ENCODE measurements at regions of chr6 and their contacts with region 1.

Region 1: DNA sequence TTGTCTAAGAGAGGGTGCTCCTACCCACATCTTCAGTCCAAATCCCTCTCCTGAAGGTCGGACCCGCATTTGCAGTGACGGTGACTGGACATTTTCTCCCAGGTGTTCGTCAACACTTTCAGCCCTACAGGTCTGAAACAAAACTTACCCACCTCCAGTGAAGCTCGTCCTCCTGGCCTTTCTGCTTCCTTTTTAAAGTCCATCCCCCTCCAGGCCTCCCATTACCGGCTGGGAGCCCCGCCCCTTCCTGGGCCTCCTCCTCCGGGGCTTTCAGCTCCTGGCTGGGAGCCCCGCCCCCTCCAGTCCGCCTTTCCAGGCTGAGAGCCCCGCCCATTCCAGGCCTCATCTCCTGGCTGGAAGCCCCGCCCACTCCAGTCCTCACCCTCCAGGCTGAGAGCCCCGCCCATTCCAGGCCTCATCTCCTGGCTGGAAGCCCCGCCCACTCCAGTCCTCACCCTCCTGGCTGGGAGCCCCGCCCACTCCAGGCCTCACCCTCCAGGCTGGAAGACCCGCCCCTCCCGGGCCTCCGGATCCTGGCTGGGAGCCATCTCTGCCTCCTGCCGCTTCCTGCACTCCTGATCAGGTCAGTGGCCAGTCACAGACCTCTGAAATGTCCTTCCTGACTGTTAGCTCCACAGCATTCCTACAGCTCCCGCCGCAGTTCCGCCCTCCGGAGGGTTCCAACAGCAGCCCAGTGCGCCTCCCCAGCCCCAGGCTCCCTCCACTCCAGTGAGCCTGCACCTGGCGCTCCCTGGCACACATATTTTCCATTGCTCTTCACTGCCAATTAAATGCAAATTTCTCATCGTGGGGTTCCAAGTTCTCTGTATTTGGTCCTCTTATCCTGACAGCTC is 98.5 kb downstream of the LY86 start:
- DNase-seq: peak; percentile 92 to 100
- H3K4me3 ChIP-seq: peak overlapping the region; percentile 73
- H3K27ac ChIP-seq: peak overlapping the region; percentile 91
- H3K4me1 ChIP-seq: peaks cover 67% of the 10 kb centered on the region
- H3K27me3 ChIP-seq: no peaks in the 10 kb centered on the region
- CTCF ChIP-seq: no peak

Region 2: GRCh38 chr6:6696867-6697531 is 10.0 kb after region 1 on chr6:
- CTCF ChIA-PET with region 1: interaction called, 34 read pairs
- POLR2A ChIA-PET with region 1: interaction called, 18 read pairs
- intact Hi-C with region 1: no loop called
- DNase-seq: peak; percentile 49 to 57
- H3K4me3 ChIP-seq: no peak overlapping the region
- H3K27ac ChIP-seq: no peak overlapping the region
- H3K4me1 ChIP-seq: peaks cover 29% of the 10 kb centered on the region
- H3K27me3 ChIP-seq: no peaks in the 10 kb centered on the region
- CTCF ChIP-seq: peak; percentile 71

Region 3: DNA sequence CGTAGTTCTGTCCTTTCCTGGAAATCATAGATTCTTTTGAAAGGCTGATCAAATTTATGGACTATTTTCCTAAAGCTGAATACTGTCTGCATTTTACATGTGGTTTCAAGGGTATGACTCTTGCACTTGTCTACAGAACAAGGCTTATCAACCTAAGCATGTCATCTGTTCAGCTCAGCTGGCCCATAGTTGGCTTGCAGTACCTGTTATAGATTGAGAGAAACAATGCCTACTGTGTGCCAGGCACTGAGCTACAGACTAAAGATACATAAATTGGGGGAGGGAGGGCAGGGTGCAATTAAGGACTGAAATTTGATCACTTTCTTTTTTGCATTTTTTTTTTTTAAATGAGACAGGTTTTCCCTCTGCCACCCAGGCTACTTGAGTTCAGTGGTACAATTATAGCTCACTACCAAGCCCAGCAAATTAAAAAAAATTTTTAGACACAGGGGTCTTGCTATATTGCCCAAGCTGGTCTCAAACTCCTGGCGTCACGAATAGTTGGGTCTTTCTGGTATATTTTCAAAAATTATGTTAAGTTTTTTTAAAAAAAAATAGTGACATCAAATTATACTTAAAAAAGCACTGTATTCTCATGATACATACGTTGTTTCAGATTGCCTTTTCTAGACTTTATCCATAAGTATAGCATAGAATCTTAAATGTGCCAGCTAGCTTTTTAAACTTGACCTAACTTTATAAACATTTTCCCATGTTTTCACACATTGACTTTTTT is 473.0 kb after region 1 on chr6:
- CTCF ChIA-PET with region 1: no interaction called
- POLR2A ChIA-PET with region 1: interaction called, 10 read pairs
- intact Hi-C with region 1: no loop called
- DNase-seq: no peak
- H3K4me3 ChIP-seq: no peak overlapping the region
- H3K27ac ChIP-seq: peak overlapping the region; percentile 85; the same call in 1 of the 2 replicates
- H3K4me1 ChIP-seq: peaks cover 50% of the 10 kb centered on the region
- H3K27me3 ChIP-seq: no peaks in the 10 kb centered on the region
- CTCF ChIP-seq: no peak

Region 4: GRCh38 chr6:7312616-7313504 is 625.9 kb after region 1 on chr6 and contains the start of gene SSR1:
- CTCF ChIA-PET with region 1: no interaction called
- POLR2A ChIA-PET with region 1: interaction called, 18 read pairs
- intact Hi-C with region 1: no loop called
- DNase-seq: peak; percentile 84 to 98
- H3K4me3 ChIP-seq: peak within 1 kb of the TSS; percentile 94
- H3K27ac ChIP-seq: peak within 1 kb of the TSS; percentile 97
- H3K4me1 ChIP-seq: peaks cover 22% of the 10 kb centered on the region
- H3K27me3 ChIP-seq: no peaks in the 10 kb centered on the region
- CTCF ChIP-seq: no peak
- total RNA-seq, gene SSR1: 104 and 118 TPM in 2 replicates

Region 5: DNA sequence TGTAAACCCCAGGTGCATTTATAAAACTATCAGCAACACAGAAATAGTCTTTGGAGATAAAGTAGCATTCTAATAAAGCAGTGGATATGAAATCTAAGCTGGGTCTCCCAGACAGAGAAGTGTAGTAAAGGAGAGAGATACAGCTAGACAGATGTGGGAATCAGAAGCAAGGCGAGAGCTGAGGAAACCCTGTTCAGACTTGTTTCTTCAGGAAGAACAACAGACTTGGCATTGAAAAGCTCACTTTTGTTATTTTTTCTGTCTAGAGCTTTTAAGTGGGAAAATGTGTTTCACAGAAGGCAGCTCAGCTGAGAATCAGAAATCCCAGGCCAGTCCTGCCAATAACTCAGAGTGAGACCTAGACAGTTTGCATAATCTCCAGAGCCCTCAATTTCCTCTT is 1695.5 kb after region 1 on chr6:
- CTCF ChIA-PET with region 1: interaction called, 18 read pairs
- POLR2A ChIA-PET with region 1: no interaction called
- intact Hi-C with region 1: no loop called
- DNase-seq: no peak
- H3K4me3 ChIP-seq: no peak overlapping the region
- H3K27ac ChIP-seq: no peak overlapping the region
- H3K4me1 ChIP-seq: no peaks in the 10 kb centered on the region
- H3K27me3 ChIP-seq: no peaks in the 10 kb centered on the region
- CTCF ChIP-seq: no peak

Measured in PC-9 (cell line).